BJ (cell line): ENCODE measurements at regions of chr5 and their contacts with region 1.

Region 1: DNA sequence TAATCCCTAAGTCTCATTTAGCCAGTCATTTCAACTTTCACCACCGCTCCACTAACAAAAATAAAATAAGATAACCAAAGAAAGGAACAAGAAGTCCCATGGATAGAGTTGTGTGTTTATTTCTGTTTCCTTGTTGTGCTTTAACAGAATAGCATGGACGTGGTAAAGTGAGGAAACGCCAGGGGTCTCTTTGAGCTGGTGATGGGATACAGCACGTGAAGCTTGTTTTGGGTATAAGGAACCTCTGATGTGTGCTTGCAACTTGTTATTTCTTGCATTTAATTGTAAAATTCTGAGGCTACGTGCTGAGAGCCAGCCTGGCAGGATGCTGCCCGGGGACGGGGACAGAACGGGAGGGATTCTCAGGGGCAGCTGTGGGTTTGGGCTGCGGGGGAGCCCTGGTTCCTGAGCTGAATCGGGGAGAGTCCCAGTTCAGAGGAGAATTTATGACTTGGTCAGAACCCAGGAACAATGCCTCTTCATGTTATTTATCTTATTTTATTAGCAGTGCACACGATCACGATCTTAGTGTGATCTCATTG is 63.4 kb downstream of the ANKRD33B start:
- DNase-seq: no peak
- H3K4me3 ChIP-seq: peak overlapping the region; percentile 26
- H3K27me3 ChIP-seq: no peaks in the 10 kb centered on the region
- CTCF ChIP-seq: no peak

Region 2: DNA sequence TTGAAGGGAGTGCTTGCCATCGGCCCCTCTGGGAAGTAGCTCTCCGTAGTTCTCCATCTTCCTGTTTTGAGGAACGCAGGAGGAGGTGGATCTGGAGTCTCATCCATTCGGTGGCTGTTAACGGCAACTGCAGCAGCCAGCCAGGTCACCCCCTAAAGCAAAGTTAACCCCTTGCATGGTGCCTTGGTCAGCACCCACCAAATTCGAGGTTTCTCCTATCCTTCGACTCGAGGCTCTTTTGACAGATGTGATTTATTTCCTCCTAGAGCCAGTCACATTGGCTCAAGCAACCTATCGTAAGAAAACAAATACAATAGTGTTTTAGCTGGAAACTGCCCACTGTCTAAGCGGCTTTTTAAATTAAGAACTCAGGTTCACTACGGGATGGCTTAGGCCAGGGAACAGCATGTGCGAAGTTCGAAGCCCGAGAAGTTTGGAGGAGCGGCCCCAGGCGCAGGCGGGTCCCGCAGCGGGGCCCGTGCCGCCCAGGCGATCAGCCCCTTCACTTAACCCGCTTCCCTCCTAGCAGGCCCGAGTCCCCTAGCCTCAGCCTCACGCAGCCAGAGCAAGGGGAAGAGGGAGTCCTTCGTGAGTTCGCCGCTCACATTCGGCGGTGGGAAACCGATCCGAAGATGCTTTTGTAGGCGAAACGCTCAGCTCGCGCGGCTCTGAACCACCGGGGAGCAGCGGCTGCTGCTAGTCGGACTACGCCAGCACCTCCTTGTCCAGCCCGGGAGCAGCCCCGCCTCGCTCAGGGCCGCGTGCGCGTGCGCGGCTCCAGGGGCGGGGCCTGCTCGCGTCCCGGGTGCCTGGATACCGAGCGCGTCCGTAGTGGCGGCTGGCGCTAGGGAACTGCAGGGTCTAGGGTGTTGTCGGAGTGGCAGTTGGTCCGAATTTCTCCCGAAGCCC is 185.9 kb before region 1 on chr5 and contains the start of gene ROPN1L:
- CTCF ChIA-PET with region 1: interaction called, 16 read pairs
- POLR2A ChIA-PET with region 1: no interaction called
- DNase-seq: peak; percentile 44
- H3K4me3 ChIP-seq: peak within 1 kb of the TSS; percentile 51
- H3K27me3 ChIP-seq: no peaks in the 10 kb centered on the region
- CTCF ChIP-seq: no peak
- polyA plus RNA-seq, gene ROPN1L: 0.54 TPM in 2 replicates

Region 3: DNA sequence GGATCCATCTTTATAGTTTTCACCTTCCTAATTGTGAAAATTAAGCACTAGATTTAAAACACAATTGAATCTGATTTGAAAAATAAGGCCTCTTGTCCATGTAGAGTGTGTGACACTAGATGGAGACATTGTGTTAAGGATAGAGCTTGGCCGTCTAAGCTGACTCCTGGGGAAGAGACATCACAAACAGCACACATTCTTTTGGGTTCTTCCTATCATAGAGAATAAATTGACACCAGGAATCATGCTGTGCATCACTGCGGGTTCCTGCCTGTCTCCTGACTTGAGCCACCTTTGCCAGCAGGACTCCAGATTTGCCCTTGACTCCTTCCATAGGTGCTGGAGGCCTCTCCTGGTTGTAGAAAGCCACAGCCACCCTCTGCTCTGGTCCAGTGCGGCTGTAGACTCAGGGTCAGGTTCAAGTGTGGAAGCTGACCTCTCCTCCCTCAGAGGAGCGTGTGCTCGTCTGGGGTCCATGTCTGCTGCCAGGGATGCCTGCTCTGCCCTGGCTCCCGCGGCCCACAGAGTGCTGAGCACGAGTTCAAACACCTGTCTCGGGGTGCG is 174.4 kb before region 1 on chr5:
- CTCF ChIA-PET with region 1: interaction called, 145 read pairs
- POLR2A ChIA-PET with region 1: interaction called, 3 read pairs
- DNase-seq: peak; percentile 67
- H3K4me3 ChIP-seq: no peak overlapping the region
- H3K27me3 ChIP-seq: no peaks in the 10 kb centered on the region
- CTCF ChIP-seq: peak; percentile 74

Region 4: DNA sequence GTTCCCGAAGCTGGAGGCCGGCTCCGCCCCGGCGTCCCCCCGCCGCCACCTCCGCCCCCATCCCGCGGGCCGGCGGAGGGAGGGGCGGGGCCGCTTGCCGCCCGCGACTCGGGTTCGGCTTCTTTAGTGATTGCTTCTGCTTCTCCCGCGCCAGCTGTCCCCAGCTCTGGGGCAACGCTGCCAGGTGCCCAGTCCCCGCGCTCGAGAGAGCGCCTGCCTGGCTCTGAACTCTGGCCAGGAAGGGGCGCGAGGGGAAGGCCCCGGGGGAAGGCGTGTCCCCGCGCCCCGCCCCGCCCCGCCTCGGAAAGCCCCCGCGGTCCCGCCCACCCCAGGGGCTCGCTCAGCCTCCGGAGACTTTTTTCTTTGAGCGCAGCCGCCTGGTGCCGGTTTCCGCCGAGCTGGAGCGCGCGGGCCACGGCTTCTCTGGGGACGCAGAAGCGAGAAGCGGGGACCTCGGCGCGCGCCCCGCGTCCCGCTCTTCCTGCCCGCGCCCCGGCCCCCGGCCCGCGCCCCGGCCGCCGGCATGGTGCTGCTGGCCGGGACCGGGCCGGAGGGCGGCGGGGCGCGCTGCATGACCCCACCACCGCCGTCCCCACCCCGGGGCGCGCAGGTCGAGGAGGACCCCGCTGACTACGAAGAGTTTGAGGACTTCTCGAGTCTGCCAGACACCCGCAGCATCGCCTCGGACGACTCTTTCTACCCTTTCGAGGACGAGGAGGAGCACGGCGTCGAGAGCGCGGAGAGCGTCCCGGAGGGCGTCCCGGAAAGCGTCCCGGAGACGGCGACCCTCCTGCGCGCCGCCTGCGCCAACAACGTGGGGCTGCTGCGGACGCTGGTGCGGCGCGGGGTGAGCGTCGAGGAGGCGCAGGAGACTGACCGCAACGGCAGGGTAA is 63.0 kb before region 1 on chr5 and contains the start of gene ANKRD33B:
- CTCF ChIA-PET with region 1: interaction called, 15 read pairs
- POLR2A ChIA-PET with region 1: no interaction called
- DNase-seq: no peak
- H3K4me3 ChIP-seq: peak within 1 kb of the TSS; percentile 95
- H3K27me3 ChIP-seq: no peaks in the 10 kb centered on the region
- CTCF ChIP-seq: no peak
- polyA plus RNA-seq, gene ANKRD33B: 2.4 and 3.4 TPM in 2 replicates

Region 5: DNA sequence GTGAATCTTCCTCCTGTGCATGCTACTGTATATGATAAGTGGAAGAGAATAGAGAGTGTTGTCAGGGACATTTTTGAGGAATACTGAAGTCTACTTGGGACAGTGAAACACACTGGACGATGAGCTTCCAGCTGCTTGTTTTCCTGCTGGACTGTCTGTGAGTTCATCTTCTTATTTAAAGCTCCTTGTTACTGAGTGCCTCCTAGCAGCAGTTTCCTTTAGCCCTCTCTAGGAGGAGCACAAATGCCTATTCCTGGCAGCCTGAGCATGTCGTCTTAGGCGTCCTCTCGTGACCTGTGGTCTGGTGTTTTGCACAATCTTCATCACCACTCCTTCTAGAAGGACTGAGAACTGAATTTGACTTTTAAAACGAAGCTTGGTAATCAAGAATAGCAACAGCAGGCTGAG is 19.6 kb before region 1 on chr5:
- CTCF ChIA-PET with region 1: interaction called, 14 read pairs
- POLR2A ChIA-PET with region 1: no interaction called
- DNase-seq: no peak
- H3K4me3 ChIP-seq: no peak overlapping the region
- H3K27me3 ChIP-seq: no peaks in the 10 kb centered on the region
- CTCF ChIP-seq: peak; percentile 31; the same call in 1 of the 2 replicates

Region 6: GRCh38 chr5:10617103-10617502 is 10.1 kb before region 1 on chr5:
- CTCF ChIA-PET with region 1: interaction called, 12 read pairs
- POLR2A ChIA-PET with region 1: no interaction called
- DNase-seq: no peak
- H3K4me3 ChIP-seq: no peak overlapping the region
- H3K27me3 ChIP-seq: no peaks in the 10 kb centered on the region
- CTCF ChIP-seq: no peak

Region 7: DNA sequence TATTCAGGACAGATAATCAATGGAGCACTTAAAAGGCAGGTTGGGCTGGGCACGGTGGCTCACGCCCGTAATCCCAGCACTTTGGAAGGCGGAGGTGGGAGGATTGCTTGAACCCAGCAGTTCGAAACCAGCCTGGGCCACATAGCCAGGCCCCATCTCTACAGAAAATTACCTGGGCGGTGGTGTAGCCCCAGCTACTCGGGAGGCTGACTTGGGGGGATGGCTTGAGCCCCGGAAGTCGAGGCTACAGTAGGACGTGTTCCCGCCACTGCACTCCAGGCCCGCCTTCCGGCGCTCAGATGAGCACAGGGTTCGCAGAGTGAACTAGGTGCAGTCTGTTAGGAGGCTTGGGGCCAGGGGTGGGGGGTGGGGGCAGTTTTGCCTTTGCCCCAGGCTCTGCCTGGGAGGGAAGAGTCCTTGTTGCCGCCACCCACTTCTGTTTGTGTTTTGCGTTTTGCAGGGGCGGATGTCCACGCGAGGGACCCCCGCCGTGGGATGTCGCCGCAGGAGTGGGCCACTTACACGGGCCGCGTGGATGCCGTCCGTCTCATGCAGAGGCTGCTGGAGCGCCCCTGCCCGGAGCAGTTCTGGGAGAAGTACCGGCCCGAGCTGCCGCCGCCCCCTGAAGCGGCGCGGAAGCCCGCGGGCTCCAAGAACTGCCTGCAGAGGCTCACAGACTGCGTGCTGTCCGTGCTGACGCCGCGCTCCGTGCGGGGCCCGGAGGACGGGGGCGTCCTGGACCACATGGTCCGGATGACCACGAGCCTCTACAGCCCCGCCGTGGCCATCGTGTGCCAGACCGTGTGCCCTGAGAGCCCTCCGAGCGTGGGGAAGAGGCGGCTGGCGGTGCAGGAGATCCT is 21.8 kb after region 1 on chr5:
- CTCF ChIA-PET with region 1: interaction called, 10 read pairs
- POLR2A ChIA-PET with region 1: no interaction called
- DNase-seq: no peak
- H3K4me3 ChIP-seq: no peak overlapping the region
- H3K27me3 ChIP-seq: no peaks in the 10 kb centered on the region
- CTCF ChIP-seq: no peak

Region 8: GRCh38 chr5:10671041-10672008 is 44.1 kb after region 1 on chr5:
- CTCF ChIA-PET with region 1: no interaction called
- POLR2A ChIA-PET with region 1: no interaction called
- DNase-seq: no peak
- H3K4me3 ChIP-seq: no peak overlapping the region
- H3K27me3 ChIP-seq: no peaks in the 10 kb centered on the region
- CTCF ChIP-seq: no peak

Region 9: DNA sequence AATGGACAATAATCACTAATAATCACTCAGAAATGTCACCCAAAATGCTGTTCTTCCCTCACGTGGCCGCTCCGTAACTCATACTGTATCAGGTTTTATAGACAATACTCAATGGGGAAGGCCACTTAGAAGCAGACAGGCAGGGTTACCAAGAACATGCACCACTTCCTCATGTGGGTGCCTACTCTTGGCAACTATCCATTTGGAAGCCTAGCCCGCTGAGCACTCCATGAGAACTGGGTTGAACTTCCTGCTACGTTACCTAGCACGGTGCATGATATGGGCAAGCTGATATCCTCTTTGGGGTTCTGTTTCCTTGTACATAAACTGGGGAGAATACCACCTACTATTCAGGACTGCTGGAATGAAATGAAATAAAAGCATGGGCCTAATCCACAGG is 119.5 kb after region 1 on chr5:
- CTCF ChIA-PET with region 1: no interaction called
- POLR2A ChIA-PET with region 1: no interaction called
- DNase-seq: no peak
- H3K4me3 ChIP-seq: no peak overlapping the region
- H3K27me3 ChIP-seq: no peaks in the 10 kb centered on the region
- CTCF ChIP-seq: no peak